ENCODE measurements at regions of chr5 and their contacts with region 1.

Region 1: GRCh38 chr5:36252722-36253365 is 11.1 kb upstream of the NADK2 start:
- DNase-seq: no peak
- H3K4me3 ChIP-seq: no peak overlapping the region
- CTCF ChIP-seq: no peak

Region 2: GRCh38 chr5:36073595-36074216 is 179.1 kb before region 1 on chr5:
- CTCF ChIA-PET with region 1: no interaction called
- POLR2A ChIA-PET with region 1: no interaction called
- DNase-seq: no peak
- H3K4me3 ChIP-seq: no peak overlapping the region
- CTCF ChIP-seq: peak; percentile 17

Region 3: DNA sequence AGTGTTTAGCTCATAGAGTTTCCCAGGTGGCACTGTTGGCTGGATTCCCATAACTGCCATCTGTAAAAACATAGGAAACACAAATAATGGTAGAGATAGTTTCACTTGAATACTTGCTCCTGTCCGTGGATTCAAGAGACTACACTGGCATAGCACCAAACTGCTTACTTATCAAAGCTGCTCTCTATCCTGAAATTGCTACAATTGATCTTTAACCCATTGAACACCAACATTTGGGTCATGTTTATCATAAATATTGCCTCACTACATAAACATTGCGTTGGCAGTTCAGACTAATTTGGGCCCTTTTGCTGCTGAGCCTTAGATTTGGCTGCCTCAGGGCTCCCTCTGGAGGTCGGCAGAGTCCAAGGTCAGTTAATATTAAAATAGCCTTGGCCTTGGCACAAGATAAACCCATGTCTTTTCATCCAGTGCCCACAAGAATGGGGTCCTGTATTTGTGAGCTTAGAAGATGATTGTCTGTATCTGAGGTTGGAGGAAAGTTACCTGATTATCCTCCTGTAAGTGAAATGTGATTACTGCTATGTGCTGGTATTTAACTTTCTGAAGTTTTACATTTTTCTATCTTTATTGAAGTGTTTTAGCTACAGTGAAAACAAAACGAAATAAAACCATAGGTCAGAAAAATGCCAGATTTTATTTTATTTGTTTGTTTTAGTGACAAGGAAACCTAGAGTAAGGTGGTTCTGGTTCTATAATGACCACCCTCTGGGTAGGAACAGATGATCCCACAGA is 52.9 kb after region 1 on chr5:
- CTCF ChIA-PET with region 1: interaction called, 12 read pairs
- POLR2A ChIA-PET with region 1: no interaction called
- DNase-seq: no peak
- H3K4me3 ChIP-seq: no peak overlapping the region
- CTCF ChIP-seq: peak; percentile 59

Region 4: DNA sequence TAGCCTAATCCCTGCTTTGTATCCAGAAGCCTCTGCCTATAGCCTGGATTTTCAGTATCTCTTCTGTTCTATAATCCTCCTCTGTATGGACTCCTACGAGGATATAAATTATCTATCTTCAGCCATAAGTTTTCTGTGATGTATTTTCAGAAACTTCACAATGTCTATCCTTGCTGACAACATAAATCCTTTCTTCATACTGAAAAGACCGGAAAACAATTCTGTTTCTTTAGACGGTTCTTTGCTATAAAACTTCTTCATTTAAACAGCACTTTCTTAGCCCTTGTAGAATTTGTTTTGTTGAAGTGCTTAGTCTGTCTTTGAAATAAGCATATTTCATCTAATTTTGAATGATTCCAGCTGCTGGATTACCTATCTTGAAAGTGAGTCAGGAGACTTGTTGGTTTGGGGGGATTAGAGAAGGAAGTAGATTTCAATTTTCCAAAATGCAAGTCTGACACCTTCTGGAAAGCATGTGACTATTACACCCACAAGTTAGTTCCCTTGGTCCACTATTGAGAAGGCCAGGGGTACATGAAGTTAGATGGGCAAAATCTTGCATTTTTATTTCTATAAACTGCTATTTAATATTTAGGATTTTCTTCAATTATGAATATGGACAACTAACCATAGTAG is 145.2 kb after region 1 on chr5:
- CTCF ChIA-PET with region 1: interaction called, 10 read pairs
- POLR2A ChIA-PET with region 1: no interaction called
- DNase-seq: no peak
- H3K4me3 ChIP-seq: no peak overlapping the region
- CTCF ChIP-seq: peak; percentile 40